Right ventricle myocardium superior (tissue), 1 donor: ENCODE measurements at regions of chr1 and their contacts with region 1.

Region 1: DNA sequence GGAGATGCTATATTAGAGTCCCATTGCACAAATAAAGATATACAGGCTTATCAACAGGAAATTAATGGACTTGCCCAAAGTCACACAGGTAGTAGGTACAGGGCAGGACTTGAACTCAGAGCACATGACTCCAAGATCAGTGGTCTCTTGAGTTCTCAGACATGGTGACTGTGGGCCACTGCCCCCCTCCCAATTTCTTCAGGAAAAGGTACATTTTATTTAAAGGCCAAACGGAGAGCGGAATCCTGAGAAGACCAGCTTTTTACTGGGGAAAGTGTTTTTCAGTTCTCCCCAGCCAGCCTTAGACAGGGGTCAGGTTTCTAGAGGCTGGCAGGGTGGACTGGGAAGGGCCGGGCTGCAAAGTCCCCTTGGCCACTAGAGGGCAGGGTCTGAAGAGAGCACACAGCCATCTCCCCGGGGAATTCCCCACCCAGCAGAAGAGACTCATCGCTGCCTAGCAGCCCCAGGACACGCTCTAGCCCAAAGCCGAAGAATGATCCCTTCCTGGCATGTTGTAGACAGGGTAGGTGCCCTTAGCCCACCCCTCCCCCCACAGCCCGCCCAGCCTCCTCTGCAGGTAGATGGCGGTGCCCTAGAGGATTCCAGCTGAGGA is 29.7 kb downstream of the ACP6 start:
- DNase-seq: peak; percentile 69
- ATAC-seq: peak; percentile 96

Region 2: GRCh38 chr1:147273409-147274336 is 367.0 kb before region 1 on chr1:
- intact Hi-C with region 1: loop called (anchors 10 kb)
- DNase-seq: no peak
- ATAC-seq: peak; percentile 88

Region 3: DNA sequence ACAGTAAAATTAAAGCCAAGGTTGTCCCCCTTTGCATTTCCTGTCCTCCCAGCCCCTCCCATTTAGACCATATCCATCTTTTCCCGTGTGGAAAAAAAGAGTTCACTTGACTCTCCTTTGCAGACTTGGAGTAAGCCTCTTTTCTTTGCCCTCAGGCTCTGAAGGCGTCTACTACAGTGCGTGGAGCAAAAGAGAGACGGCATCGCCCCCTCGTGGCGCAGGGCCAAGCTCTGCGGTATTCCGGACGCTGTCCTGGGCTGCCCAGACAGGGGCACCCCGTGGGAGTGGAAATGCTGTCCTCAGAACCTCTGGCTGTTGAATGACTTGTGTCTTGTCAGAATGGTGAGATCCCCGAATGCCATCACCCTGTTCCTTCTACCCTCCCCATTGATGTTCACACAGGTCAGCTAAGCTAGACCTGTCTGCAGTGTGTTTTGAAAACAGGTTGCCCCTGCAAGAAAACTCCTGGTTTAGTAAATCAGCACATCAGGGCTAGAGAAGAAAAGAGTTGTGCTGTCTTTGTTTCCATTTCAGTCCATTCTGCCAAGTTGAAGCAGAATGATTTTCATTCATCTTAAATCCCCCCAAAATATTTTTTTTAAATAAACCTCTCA is 249.6 kb after region 1 on chr1:
- intact Hi-C with region 1: loop called (anchors 10 kb)
- DNase-seq: peak; percentile 84
- ATAC-seq: peak; percentile 92